GM13977 (cell line): ENCODE measurements at regions of chr19 and their contacts with region 1.

Region 1: DNA sequence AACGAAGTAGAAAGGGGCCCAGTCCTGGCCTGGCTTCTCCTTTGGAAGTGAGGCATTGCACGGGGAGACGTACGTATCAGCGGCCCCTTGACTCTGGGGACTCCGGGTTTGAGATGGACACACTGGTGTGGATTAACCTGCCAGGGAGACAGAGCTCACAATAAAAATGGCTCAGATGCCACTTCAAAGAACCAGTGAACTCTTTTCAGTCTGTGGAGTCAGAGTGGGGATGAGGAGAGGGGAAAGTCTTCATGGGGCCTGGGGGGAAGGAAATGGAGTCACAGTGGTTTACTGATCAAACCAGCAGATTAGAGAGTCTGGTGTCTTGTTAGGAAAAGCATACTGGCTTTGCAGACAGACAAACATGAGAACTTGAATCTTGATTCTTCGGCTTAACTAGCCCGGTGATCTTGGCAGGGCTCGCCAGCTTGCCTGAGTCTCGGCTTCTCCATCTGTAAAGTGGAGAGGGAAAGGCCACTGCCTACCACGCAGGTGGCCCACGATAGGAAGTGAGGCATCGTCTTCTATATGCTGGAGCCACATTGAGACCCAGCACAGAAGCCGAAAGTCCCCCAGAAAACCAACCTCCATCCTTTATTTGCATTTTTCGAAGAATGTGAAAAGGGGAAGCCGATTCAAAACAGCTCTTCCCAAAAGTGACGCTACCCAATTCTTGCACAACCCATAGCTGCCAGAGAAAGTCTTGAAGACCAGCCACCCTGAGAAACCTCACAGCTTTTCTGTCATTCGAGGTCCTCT is at the start of gene FFAR1:
- DNase-seq: peak; percentile 84
- CTCF ChIP-seq: no peak

Region 2: GRCh38 chr19:35468637-35469036 is 121.3 kb after region 1 on chr19:
- in situ Hi-C with region 1: loop called (anchors 5 kb)
- DNase-seq: peak; percentile 78
- CTCF ChIP-seq: peak; percentile 91